Heart left ventricle (tissue), 16 donors: ENCODE measurements at regions of chr11 and their contacts with region 1.

Region 1: DNA sequence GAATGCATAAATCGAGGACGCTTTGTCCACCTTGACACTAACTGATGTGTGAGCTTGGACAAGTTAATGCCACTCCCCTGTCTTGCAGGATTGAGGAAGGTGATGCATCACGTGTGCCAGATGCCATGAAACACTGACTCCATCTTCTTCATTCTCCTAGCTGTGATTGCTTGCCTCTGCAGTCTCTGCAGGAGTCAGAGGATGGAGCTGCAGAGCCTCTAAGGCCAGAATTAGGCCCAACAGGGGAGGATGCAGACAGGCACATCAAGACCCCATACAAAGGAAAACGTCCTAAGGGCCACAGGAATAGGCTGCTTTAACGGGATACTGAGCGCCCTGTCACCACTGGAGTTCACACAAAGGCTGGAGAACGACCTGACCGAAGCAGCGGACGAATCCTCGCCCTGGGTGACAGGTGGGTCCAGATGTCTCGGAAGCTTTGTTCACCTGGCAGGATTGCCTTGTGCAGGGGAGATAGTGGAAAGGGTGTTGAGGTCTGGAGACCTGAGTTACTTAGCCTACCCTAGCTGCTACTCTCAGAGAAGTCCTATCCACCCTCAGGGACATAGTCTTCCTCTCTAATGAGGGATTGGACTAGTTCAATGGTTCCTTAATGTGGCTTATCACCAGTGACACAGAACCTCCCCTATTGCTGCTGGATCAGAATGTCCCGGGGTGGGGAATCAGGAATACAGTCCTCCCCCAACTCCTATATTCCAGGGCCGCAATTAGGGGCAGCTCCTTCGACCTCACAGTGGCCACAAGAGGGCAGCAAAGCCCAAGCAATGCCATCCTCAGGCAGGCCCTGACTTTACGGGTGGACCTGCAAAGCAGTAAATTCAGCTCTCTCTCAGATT is 32.4 kb downstream of the DBX1 start:
- DNase-seq: peak; percentile 71 to 82 (median 76)
- ATAC-seq: peak; percentile 63 to 86 (median 80)
- H3K4me3 ChIP-seq: no peak overlapping the region
- H3K27ac ChIP-seq: no peak overlapping the region
- H3K4me1 ChIP-seq: peaks cover 0 to 11% (median 4%) of the 10 kb centered on the region in 12 donors
- H3K27me3 ChIP-seq: peaks cover 0 to 13% (median 0%) of the 10 kb centered on the region in 9 donors
- CTCF ChIP-seq: peak; percentile 78 to 87 (median 83)
- POLR2A ChIP-seq: no peak

Region 2: GRCh38 chr11:19938169-19938856 is 189.6 kb before region 1 on chr11:
- intact Hi-C with region 1: loop called in 2 of 10 experiments (anchors 5 to 10 kb)
- DNase-seq: no peak
- ATAC-seq: peak in 3 of 4 donors; percentile 52 to 62 (median 57)
- H3K4me3 ChIP-seq: no peak overlapping the region
- H3K27ac ChIP-seq: no peak overlapping the region
- H3K4me1 ChIP-seq: peaks cover 0 to 9% (median 0%) of the 10 kb centered on the region in 12 donors
- H3K27me3 ChIP-seq: no peaks in the 10 kb centered on the region
- CTCF ChIP-seq: peak; percentile 63 to 86 (median 76)
- POLR2A ChIP-seq: no peak

Region 3: DNA sequence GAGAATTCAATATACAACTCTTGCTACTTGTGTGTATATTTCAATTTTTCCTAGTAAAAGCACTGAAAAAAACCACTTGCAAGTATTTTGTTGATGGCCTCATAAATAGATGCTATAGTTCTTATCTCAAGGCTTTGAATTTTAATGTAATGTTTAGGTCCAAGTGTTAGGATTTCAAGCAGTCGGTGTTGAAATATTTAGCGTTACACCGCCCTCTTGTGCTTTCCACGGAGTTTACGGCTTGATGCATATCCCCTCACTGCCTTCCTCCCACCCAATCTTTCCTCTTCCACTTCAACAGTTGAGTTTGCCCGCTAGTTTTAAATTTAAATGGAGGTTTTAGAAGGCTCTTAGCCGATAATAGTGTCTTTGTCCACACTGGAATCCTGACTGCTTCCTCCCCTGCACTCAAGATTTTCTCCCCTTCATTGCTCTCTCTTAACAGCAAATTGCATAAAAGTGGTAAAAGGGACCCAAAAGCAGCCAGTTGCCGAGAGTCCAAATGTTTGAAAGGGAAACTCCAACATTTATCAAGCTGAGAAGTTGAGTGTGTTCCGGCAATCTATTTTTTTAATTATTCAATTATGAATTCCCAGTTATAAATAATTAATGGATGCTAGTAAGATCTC is 209.7 kb after region 1 on chr11:
- intact Hi-C with region 1: loop called in 6 of 10 experiments (anchors 5 kb)
- DNase-seq: no peak
- ATAC-seq: no peak
- H3K4me3 ChIP-seq: no peak overlapping the region
- H3K27ac ChIP-seq: no peak overlapping the region
- H3K4me1 ChIP-seq: peaks cover 0 to 3% (median 0%) of the 10 kb centered on the region in 12 donors
- H3K27me3 ChIP-seq: peaks cover 5 to 52% (median 12%) of the 10 kb centered on the region in 9 donors
- CTCF ChIP-seq: peak in 10 of 12 donors; percentile 8 to 52 (median 30)
- POLR2A ChIP-seq: no peak

Region 4: DNA sequence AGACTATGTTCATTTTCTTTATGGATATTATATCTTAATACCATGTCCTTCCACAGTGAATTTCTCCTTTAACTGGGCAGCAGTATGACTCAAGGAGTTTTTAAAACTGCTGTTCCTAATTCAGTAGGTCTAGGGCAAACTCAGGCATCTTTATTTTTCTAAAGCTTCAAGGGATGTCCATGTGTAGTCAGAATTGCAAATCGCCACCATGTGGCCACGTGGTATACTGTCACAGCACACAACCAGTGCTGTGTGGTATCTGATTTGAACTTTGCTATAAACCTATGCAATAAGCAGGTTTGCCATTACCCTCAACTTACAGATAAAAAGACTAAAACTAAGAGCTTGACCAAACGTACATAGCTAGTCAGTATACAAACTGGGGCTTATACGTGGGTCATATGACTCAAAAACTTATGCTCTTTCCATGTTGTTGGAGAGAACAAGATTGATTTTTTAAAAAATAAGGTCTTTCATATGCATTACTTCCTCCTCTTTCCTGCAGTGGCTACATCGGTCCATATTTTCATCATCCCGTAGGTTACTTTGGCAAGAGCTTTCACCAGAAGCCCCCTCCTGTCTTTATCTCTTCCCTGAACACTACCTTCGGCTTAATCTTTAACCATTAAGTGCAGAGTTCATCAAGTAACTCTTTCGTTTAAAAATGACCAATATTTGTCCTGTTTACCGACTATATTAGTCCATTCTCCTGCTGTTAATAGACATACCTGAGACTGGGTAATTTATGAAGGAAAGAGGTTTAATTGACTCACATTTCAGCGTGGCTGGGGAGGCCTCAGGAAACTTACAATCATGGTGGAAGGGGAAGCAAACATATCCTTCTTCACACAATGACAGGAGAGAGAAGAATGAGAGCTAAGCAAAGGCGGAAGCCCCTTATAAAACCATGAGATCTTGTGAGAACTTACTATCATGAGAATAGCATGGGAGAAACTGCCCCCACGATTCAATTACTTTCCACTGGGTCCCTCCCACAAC is 227.6 kb after region 1 on chr11:
- intact Hi-C with region 1: loop called (anchors 1 to 5 kb)
- DNase-seq: peak in 1 of 5 donors; percentile 28
- ATAC-seq: peak in 3 of 4 donors; percentile 48 to 75 (median 53)
- H3K4me3 ChIP-seq: no peak overlapping the region
- H3K27ac ChIP-seq: no peak overlapping the region
- H3K4me1 ChIP-seq: peaks cover 0 to 4% (median 0%) of the 10 kb centered on the region in 12 donors
- H3K27me3 ChIP-seq: peaks cover 0 to 2% (median 0%) of the 10 kb centered on the region in 9 donors
- CTCF ChIP-seq: peak; percentile 31 to 68 (median 43)
- POLR2A ChIP-seq: no peak

Region 5: DNA sequence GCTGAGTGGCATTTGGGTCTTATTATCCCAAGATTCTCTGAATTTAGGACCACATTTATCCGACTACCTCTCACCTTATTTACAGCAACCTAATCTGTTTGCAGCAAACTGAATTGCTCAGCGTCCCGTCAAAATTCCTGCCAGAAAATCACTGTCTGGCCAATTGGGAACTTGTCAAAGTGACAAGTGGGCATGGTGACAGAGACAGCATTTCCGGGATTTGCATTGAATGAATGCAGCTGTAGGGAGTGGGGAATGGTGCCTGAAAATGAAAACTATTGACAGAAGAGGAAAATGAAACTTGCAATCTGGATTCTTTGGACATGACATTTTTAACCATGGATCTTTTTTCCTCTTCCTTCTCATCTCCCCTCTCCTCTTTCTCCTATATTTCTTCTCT is 655.3 kb after region 1 on chr11:
- intact Hi-C with region 1: no loop called
- DNase-seq: no peak
- ATAC-seq: no peak
- H3K4me3 ChIP-seq: no peak overlapping the region
- H3K27ac ChIP-seq: no peak overlapping the region
- H3K4me1 ChIP-seq: no peaks in the 10 kb centered on the region
- H3K27me3 ChIP-seq: no peaks in the 10 kb centered on the region
- CTCF ChIP-seq: no peak
- POLR2A ChIP-seq: no peak